Right ventricle myocardium superior (tissue), 1 donor: ENCODE measurements at regions of chr1 and their contacts with region 1.

Region 1: DNA sequence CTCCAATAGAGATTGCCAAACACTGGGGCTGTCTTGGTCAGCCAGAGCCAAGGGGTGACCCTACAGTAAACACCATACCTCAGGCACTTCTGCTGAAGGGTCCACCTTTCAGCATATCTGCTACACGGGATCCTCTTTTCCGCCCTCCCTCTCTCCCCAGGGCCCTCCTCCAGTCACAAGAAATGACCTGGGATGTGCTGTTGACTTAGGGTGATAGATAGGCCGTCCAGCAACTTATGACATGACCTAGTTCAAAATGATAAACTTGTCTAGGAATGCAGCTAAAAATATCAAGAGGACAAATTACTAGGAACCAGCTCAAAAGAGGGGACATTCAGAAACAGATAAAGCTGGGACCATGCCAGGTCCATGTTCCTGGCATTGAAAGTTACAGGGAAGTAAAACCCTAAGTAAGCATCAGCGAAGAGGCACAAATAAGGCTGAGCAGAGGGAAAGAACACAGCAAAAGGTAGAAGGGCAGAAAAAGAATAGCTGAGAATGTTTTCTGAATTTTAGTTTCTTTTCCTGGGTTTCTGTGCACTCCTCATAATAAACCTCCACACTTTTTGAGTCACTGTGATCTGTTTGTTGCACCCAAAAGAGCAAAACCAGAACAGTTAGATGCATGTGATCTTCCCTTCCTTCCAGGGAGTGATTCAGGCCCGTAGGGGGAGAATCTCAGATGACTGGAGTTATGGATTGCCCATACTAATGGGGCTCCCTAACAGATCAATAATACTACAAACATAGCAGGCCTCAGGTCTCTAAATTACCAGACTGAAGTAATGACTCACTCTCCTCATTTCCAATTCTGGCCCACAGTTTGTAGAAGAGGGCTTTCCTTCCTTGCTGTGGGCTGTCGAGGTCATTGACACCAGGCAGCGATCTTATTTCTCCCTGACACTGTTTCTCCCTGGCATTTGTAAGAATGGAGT is 48.9 kb upstream of the F3 start:
- DNase-seq: no peak
- ATAC-seq: peak; percentile 81

Region 2: DNA sequence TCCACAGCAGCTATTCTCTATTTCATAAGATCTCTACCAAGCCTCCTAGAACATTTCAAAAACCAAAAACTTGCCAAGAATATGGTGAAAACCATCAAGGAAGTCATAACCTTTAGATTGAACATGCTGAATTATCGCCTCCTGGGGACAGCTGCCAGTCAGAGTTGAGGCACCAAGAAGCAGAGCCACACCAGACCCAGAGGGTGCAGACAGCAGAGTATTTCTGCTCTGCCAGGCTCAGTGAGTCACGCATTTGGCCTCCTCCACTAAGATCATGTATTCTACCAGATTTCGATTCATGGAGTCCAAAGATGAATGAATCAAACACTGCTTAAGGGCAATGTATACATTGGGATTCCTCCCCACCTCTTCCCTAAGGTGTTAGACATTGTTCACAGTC is 51.0 kb before region 1 on chr1:
- intact Hi-C with region 1: loop called (anchors 5 kb)
- DNase-seq: peak; percentile 42
- ATAC-seq: peak; percentile 19

Region 3: GRCh38 chr1:94734963-94735899 is 144.8 kb after region 1 on chr1:
- intact Hi-C with region 1: no loop called
- DNase-seq: no peak
- ATAC-seq: peak; percentile 74